Activated CD8-positive, alpha-beta T cell treated with anti-CD3 and anti-CD28 coated beads for 36 hours (primary cell): ENCODE measurements at regions of chr1 and their contacts with region 1.

Region 1: DNA sequence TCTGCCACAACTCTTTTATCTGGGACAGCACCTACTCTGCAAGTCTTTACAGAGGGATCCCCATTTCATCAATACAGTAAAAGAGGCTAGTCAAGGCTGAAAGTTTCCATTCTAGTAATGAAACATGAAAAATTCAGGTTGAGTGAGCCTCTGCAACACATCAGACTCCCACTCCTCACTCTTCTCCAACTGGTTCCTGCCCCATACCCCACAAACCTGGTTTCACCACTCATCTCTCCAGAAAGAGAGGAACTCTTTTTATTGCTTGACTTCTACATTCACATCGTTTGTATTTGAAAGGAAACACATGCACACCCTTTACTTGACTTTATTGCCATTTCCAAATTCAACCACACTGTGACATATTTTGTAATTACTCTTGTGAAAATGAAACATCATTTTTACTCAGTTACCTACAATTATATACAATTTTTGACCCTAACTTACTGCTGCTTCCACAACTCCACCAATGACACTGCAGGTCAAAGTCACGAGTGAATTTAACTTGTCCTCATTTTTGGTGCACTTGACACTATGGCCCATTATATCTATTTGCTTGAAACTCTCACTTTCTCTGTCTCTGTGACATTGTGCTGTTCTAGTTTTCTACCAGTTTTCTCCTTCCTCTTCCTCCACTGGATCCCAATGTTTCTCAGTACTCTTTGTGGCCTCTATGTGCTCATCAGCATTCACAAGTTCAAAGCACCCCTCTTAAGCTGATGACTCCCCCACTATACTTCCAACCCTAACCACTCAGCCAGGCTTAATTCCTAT is 8.0 kb downstream of the STX6 start:
- DNase-seq: peak; percentile 48
- ATAC-seq: peak; percentile 83
- H3K4me3 Mint-ChIP-seq: no peak overlapping the region
- H3K27ac Mint-ChIP-seq: no peak overlapping the region
- H3K4me1 Mint-ChIP-seq: peaks cover 56% of the 10 kb centered on the region
- H3K27me3 Mint-ChIP-seq: no peaks in the 10 kb centered on the region
- CTCF ChIP-seq: no peak

Region 2: DNA sequence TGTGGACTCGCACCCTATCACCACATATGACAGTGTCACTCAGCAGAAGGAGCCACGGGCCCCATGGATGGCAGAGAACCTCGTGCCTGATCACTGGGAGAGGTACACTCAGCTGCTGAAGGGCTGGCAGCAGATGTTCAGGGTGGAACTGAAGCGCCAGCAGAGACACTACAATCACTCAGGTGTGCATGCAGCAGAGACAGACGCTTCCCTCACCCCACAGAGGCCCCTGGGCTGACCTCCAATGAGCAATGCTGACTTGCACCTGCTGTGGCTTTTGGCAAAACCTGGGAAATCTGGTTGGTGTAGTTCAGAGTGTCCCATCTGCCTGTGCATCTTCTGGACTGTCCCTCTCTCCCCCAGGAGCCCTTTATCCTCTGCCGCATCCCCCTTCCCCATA is 50.1 kb before region 1 on chr1:
- CTCF ChIA-PET with region 1: no interaction called
- POLR2A ChIA-PET with region 1: no interaction called
- intact Hi-C with region 1: no loop called
- DNase-seq: no peak
- ATAC-seq: no peak
- H3K4me3 Mint-ChIP-seq: no peak overlapping the region
- H3K27ac Mint-ChIP-seq: no peak overlapping the region
- H3K4me1 Mint-ChIP-seq: peaks cover 7% of the 10 kb centered on the region
- H3K27me3 Mint-ChIP-seq: no peaks in the 10 kb centered on the region
- CTCF ChIP-seq: no peak

Region 3: GRCh38 chr1:180981596-180982387 is 32.9 kb before region 1 on chr1:
- CTCF ChIA-PET with region 1: no interaction called
- POLR2A ChIA-PET with region 1: no interaction called
- intact Hi-C with region 1: loop called (anchors 2 kb)
- DNase-seq: peak; percentile 83
- ATAC-seq: peak; percentile 94
- H3K4me3 Mint-ChIP-seq: peak overlapping the region; percentile 50
- H3K27ac Mint-ChIP-seq: peak overlapping the region; percentile 90
- H3K4me1 Mint-ChIP-seq: peaks cover 36% of the 10 kb centered on the region
- H3K27me3 Mint-ChIP-seq: no peaks in the 10 kb centered on the region
- CTCF ChIP-seq: no peak